Mammary epithelial cell (primary cell): ENCODE measurements at regions of chr1 and their contacts with region 1.

Region 1: DNA sequence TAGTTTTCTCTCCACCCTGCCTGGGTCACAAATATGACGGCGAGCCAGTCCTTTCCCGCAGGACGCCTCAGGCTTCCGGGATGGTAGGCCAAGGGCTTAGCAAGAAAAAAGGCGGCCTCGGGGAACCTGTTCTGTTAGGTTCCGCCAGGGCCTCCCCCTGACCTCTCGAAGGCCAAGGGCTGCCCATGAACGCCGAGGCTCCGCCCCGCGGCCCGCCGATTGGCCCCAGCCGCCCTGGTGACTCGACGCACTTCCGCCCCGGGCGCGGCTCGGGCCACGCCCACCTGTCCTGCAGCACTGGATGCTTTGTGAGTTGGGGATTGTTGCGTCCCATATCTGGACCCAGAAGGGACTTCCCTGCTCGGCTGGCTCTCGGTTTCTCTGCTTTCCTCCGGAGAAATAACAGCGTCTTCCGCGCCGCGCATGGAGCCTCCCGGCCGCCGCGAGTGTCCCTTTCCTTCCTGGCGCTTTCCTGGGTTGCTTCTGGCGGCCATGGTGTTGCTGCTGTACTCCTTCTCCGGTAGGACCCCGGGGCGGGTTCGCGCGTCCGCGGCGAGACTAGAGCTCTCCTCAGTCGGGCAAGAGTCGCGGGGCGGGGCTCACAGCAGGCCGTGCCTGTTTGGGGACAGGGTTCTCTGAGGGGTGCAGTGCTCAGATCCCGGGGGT is at the start of gene CD46:
- DNase-seq: peak; percentile 97
- H3K4me3 ChIP-seq: peak within 1 kb of the TSS; percentile 63 to 85 (median 70)
- H3K27ac ChIP-seq: peak within 1 kb of the TSS; percentile 85
- H3K4me1 ChIP-seq: peaks cover 49% of the 10 kb centered on the region
- H3K27me3 ChIP-seq: no peaks in the 10 kb centered on the region
- CTCF ChIP-seq: no peak
- total RNA-seq, gene CD46: 158 to 159 TPM

Region 2: GRCh38 chr1:207711285-207711684 is 40.6 kb before region 1 on chr1:
- CTCF ChIA-PET with region 1: no interaction called
- dilution Hi-C with region 1: no loop called
- in situ Hi-C with region 1: no loop called
- intact Hi-C with region 1: loop called (anchors 2 kb)
- DNase-seq: peak; percentile 14
- H3K4me3 ChIP-seq: no peak overlapping the region
- H3K27ac ChIP-seq: no peak overlapping the region
- H3K4me1 ChIP-seq: peaks cover 15% of the 10 kb centered on the region
- H3K27me3 ChIP-seq: no peaks in the 10 kb centered on the region
- CTCF ChIP-seq: no peak